ENCODE measurements at regions of chr16 and their contacts with region 1.

Region 1: GRCh38 chr16:70481929-70482536 is 27.6 kb downstream of the FCSK start:
- DNase-seq: no peak
- CTCF ChIP-seq: no peak

Region 2: DNA sequence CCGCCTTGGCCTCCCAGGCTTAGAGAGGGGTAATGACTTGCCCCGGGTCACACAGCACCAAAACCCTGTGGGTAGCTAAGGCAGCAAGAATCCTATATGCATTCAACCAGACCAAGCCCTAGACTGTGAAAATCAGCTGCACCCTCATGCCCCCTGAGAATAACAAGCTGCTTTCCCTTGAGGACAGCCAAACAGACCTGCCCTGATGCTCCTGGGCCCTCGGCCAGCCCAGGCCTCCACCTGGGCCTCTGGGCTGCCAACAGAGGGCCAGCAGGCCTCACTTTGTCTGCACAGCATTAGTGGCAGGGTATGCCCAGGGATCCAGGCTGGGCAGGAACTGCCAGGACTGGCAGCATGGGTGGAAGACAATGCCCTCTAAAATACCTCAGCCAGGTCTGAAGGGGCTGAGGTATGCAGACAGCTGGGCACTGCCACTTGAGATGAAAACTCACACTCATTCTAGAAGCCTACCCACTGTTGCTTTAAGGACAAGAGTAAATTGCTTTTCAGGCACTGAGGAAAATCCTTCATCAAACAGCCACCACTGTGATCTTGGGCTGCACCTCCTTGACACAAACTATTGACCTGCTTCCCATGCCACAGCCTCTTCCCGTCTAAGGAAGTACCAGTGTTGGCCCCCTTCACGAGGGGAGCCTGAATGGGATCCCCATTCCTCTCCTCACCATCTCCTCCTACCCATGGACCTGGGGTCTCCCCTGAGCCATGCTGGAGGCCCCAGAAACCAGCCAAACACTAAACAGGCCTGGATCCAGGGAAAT is 52.0 kb before region 1 on chr16:
- CTCF ChIA-PET with region 1: interaction called, 3 read pairs
- POLR2A ChIA-PET with region 1: interaction called, 12 read pairs
- DNase-seq: no peak
- CTCF ChIP-seq: no peak

Region 3: DNA sequence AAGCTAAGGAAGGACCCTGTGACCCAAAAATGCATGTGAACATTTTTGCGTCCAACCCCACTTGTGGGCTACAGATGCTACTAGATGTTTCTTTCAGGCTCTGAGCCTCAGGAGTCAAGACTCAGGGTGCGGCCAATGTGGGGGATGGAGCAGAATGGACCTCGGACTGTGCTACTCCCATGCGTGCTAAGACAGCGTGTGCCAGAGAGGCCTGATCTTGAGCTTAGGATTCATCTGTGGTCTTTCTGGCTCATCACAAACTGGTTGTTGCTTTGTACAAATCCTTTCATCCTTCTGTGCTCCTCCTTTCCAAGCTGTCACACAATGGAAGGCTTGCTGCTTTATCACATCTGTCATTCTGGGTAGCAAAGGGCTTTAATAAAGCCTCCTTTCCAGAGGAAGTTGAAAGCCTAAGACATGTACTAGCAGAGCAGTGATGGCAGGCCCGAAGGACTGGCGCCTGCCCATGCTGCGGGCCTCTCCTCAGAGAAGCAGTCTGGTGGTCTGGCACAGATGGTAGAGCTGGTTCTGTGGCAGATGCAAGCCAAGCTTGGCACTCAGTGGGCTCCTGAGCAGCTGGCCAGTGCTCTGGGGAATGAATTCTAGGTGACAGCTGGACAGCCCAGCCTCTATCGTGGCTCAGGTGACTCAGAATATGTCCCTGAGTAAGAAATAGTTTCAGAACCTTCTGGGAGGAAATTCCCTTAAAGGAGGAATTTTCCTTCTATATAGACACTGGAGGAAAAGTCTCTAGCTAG is 13.6 kb after region 1 on chr16:
- CTCF ChIA-PET with region 1: interaction called, 14 read pairs
- POLR2A ChIA-PET with region 1: no interaction called
- DNase-seq: no peak
- CTCF ChIP-seq: no peak

Region 4: GRCh38 chr16:70809396-70810060 is 327.5 kb after region 1 on chr16:
- CTCF ChIA-PET with region 1: no interaction called
- POLR2A ChIA-PET with region 1: no interaction called
- DNase-seq: no peak
- CTCF ChIP-seq: no peak